Calu3 (cell line): ENCODE measurements at regions of chr2 and their contacts with region 1.

Region 1: GRCh38 chr2:6202756-6203155 is 510.6 kb downstream of the SOX11 start:
- DNase-seq: no peak
- H3K4me3 Mint-ChIP-seq: peak overlapping the region; percentile 57
- H3K27ac Mint-ChIP-seq: peak overlapping the region; percentile 42
- H3K4me1 Mint-ChIP-seq: peaks cover 38% of the 10 kb centered on the region
- H3K27me3 Mint-ChIP-seq: no peaks in the 10 kb centered on the region
- CTCF ChIP-seq: no peak

Region 2: GRCh38 chr2:6073241-6074088 is 129.3 kb before region 1 on chr2:
- CTCF ChIA-PET with region 1: no interaction called
- intact Hi-C with region 1: loop called (anchors 10 kb)
- DNase-seq: no peak
- H3K4me3 Mint-ChIP-seq: no peak overlapping the region
- H3K27ac Mint-ChIP-seq: no peak overlapping the region
- H3K4me1 Mint-ChIP-seq: peaks cover 12% of the 10 kb centered on the region
- H3K27me3 Mint-ChIP-seq: no peaks in the 10 kb centered on the region
- CTCF ChIP-seq: no peak

Region 3: GRCh38 chr2:6103949-6104348 is 98.8 kb before region 1 on chr2:
- CTCF ChIA-PET with region 1: no interaction called
- intact Hi-C with region 1: loop called (anchors 5 kb)
- DNase-seq: peak; percentile 63
- H3K4me3 Mint-ChIP-seq: peak overlapping the region; percentile 15
- H3K27ac Mint-ChIP-seq: no peak overlapping the region
- H3K4me1 Mint-ChIP-seq: peaks cover 16% of the 10 kb centered on the region
- H3K27me3 Mint-ChIP-seq: no peaks in the 10 kb centered on the region
- CTCF ChIP-seq: no peak